HEK293T (cell line): ENCODE measurements at regions of chr17 and their contacts with region 1.

Region 1: DNA sequence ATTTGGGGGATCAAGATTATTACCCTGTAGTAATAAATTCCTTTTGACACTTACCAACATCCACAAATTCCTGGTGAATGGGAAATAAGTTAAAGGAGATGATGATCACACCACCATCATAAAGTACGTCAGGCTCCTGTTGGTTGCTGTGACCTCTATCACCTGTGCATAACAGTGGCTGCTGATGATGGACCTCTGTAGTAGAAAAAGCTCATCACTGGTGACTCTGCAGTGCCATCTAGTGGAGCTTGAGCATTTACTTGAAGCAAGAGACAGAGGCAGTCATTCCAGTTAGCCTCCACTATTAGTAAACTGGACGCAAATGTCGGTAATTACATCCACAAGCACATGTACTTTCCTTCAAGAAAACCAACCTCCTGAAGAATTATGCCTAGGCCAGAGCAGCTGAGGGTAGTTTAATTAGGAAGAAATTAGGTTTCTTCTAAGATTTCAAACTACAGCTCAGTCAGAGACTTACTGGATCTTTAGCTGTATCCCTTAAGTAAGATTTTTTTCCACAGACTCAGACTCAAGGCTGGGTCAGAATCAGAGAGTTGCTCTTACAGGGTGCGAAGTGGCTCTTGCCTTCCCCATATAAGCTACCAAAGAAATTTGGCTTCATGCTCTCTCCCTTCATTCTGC is 39.3 kb downstream of the CYB561 start:
- DNase-seq: peak; percentile 82

Region 2: DNA sequence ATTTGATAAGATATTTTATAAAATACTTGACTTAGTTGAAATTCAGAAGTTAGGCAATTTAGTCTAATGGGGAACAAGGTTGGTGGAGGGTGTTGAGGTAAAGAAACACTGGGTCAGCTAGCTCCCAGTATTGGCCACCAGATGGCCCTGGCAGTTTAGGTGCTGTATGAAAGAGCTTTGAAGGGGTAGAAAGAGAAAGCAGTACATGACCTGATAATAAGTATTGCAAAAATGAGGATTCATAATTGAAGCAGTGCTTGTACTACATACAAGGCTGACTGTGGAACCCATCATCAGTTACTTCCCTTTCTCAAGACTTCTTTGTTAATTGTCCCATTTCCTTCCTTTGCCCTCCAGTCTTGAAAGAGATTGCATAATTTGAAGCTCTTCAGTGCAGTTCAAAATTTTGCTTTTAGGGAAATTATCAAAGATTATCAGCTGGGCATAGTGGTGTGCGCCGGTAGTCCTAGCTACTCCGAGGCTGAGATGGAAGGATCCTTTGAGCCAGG is 411.4 kb before region 1 on chr17:
- CTCF ChIA-PET with region 1: interaction called, 11 read pairs
- POLR2A ChIA-PET with region 1: no interaction called
- DNase-seq: peak; percentile 45

Region 3: GRCh38 chr17:63082273-63082993 is 324.4 kb before region 1 on chr17:
- CTCF ChIA-PET with region 1: interaction called, 13 read pairs
- POLR2A ChIA-PET with region 1: no interaction called
- DNase-seq: no peak